Transverse colon (tissue), 4 donors: ENCODE measurements at regions of chr10 and their contacts with region 1.

Region 1: GRCh38 chr10:602391-603005 is 87.0 kb downstream of the DIP2C start:
- DNase-seq: no peak
- H3K4me3 ChIP-seq: no peak overlapping the region
- H3K27ac ChIP-seq: no peak overlapping the region
- H3K4me1 ChIP-seq: peaks cover 20 to 33% (median 26%) of the 10 kb centered on the region in 4 donors
- H3K27me3 ChIP-seq: no peaks in the 10 kb centered on the region
- CTCF ChIP-seq: no peak
- EP300 ChIP-seq: no peak
- POLR2A ChIP-seq: no peak

Region 2: DNA sequence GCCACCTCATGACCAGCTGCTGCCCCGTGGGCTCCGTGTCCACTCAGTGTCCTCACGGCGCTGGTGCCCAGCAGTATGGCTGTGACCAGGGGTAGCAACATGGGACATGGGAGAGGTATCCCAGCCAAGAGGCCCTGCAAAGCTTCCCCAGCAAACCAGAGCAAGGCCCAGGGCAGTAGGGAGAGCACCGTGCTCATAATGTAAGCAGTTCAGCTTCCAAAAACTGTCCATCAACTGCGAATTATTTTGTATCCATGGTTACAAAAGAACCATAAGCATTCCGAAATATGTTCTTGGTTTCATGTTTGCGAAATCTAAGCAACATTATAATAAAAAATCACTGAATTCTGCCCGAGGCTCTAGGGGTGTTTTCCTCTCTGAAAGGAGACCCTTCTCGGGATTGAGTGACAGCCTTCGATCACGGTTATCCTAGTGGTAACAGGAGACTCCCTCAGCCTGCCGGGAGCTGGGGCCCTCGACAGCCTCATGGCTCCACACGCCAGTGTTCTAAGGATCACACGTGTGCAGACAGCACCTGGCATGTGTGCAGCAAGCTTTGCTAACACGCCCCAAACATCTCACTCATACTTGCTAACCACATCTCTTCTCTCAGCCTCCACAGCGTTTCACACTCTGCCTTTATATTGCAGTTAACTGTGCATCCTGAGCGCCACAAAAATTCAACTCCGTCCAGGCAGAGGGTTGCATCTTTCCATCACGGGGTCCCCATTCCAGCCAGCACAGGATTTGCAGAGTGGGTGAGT is 30.6 kb before region 1 on chr10:
- in situ Hi-C with region 1: no loop called
- intact Hi-C with region 1: loop called (anchors 1 kb)
- DNase-seq: no peak
- H3K4me3 ChIP-seq: no peak overlapping the region
- H3K27ac ChIP-seq: peak overlapping the region; percentile 42 to 74 (median 58)
- H3K4me1 ChIP-seq: peaks cover 0 to 26% (median 18%) of the 10 kb centered on the region in 4 donors
- H3K27me3 ChIP-seq: no peaks in the 10 kb centered on the region
- CTCF ChIP-seq: no peak
- EP300 ChIP-seq: no peak
- POLR2A ChIP-seq: no peak